ENCODE measurements at regions of chr13 and their contacts with region 1.

Region 1: GRCh38 chr13:59696271-59696670 is 467.5 kb downstream of the DIAPH3 start:
- DNase-seq: no peak
- H3K4me3 ChIP-seq: no peak overlapping the region
- CTCF ChIP-seq: no peak
- POLR2A ChIP-seq: no peak

Region 2: DNA sequence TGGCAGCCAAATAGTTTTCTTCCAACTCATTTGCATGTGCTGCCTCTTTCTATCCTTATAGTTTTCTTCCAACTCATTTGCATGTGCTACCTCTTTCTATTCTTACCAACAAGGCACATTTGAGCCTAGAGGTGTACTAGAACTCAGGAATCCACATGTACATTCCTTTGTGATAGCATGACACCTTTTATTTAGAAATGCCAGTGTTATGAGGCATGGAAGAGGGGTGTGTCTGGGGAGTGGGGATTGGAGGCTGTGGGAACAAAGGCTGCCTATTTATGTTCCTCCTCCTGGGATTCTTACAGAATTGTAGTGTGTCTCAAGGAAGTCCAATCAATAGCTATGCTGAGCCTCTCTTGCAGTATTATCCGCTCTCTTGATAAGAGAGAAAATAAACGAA is 1098.0 kb before region 1 on chr13:
- intact Hi-C with region 1: loop called (anchors 5 kb)
- DNase-seq: no peak
- H3K4me3 ChIP-seq: no peak overlapping the region
- CTCF ChIP-seq: no peak
- POLR2A ChIP-seq: no peak

Region 3: GRCh38 chr13:60794751-60795150 is 1098.5 kb after region 1 on chr13:
- intact Hi-C with region 1: no loop called
- DNase-seq: no peak
- H3K4me3 ChIP-seq: no peak overlapping the region
- CTCF ChIP-seq: no peak
- POLR2A ChIP-seq: no peak

Measured in lower leg skin (tissue), 4 donors.